Heart left ventricle (tissue), 16 donors: ENCODE measurements at regions of chr3 and their contacts with region 1.

Region 1: DNA sequence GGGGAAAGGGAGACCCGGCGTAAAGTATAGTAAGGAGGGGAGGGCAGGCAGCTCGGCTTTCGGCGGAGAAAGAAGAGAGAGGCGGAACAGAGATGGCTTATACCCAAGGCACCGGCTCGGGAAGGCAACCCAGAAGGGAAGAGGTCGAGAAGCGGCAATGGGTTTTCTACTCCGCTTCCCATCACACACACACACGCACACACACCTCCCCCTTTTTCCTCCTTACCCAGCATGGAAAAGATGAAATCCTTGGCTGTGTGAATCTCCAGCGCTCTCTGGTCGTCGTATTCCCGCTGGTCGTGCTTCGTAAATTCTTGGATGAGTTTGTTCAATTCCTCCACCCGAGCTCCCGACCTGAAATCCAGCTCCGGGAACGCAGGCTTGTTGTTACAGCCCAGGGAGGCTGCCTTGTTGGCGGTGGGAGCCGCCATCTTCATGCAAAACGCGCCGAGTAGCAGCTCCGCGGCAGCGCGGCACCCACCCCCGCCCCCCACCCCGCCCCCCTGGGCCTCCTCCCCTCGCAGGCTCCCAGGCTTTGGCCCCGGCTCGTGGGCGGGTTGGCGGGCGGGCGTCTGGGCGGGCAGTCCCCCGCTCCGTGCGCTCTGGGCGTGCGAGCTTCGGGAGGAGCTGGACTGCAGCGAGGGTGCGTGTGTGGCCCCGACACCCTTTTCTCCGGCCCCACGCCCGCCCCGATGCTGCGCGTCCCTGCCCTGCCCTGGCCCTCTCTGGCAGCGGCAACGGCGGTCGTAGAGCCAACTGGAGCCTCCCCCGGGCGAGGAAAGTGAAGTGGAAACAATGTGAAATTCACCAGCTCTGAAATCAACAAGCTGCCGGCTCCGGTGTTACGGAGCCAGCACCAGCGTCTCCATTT is at the start of gene MB21D2:
- DNase-seq: peak; percentile 82 to 87 (median 84)
- ATAC-seq: peak; percentile 67 to 95 (median 88)
- H3K4me3 ChIP-seq: peak within 1 kb of the TSS; percentile 60 to 95 (median 76)
- H3K27ac ChIP-seq: peak within 1 kb of the TSS; percentile 72 to 97 (median 94)
- H3K4me1 ChIP-seq: peaks cover 0 to 37% (median 26%) of the 10 kb centered on the region in 12 donors
- H3K27me3 ChIP-seq: peaks cover 0 to 7% (median 0%) of the 10 kb centered on the region in 9 donors
- CTCF ChIP-seq: peak in 3 of 12 donors; percentile 13 to 50 (median 20)
- POLR2A ChIP-seq: peak in 1 of 2 donors; percentile 64
- total RNA-seq, gene MB21D2: 2.3 to 5.0 (median 4.0) TPM

Region 2: DNA sequence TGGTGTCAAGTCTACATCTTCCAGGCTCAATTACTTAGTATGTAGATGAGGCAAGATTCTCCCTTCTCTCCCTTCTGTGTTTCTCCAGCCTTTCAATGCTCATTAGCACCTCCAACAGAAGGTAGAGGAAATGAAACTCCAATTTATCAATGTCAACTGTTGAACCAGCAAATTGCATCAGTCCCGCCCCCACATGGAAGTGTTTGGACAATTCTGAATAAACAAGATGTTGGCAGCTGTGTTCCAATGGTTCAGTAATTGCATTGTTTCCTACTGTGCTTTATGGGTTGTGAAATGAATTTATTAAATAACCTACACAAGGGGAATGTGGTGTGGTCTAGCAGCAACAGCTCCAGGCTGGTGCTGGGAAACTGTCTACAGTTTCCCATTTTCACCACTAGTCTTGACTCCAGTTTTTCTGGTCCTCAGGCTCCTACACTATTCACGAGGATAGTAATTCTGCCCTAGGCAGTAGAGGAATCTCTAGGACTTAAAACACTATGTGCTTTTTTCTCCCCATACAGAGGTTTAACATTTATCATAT is 91.9 kb before region 1 on chr3:
- intact Hi-C with region 1: loop called in 6 of 10 experiments (anchors 5 kb)
- DNase-seq: no peak
- ATAC-seq: peak in 1 of 4 donors; percentile 66
- H3K4me3 ChIP-seq: no peak overlapping the region
- H3K27ac ChIP-seq: no peak overlapping the region
- H3K4me1 ChIP-seq: peaks cover 0 to 34% (median 22%) of the 10 kb centered on the region in 12 donors
- H3K27me3 ChIP-seq: no peaks in the 10 kb centered on the region
- CTCF ChIP-seq: peak in 2 of 12 donors; percentile 8 to 14
- POLR2A ChIP-seq: no peak

Region 3: GRCh38 chr3:192831111-192831644 is 86.5 kb before region 1 on chr3:
- intact Hi-C with region 1: loop called in 6 of 10 experiments (anchors 5 kb)
- DNase-seq: no peak
- ATAC-seq: peak in 1 of 4 donors; percentile 39
- H3K4me3 ChIP-seq: no peak overlapping the region
- H3K27ac ChIP-seq: peak overlapping the region in 4 of 12 donors; percentile 5 to 61 (median 24)
- H3K4me1 ChIP-seq: peaks cover 3 to 57% (median 40%) of the 10 kb centered on the region in 12 donors
- H3K27me3 ChIP-seq: no peaks in the 10 kb centered on the region
- CTCF ChIP-seq: no peak
- POLR2A ChIP-seq: no peak

Region 4: DNA sequence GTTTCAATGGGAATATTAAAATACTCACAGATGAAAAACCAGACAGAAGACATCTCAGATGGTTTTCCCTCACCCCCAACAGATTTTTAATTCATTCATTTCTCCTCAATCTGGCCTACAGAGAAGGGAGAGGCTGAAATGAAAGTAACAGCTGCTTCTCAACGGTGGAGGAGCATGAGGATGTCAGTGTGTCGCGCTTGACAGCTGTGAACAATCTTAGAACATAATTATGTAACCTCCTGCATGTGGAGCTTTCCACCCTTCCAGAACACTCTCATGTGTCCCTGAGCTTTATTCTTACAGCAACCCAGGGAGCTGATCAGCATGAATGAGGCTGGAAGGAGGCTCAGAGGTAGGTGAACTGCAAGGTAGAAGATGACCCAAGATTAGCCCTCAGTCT is 52.7 kb before region 1 on chr3:
- intact Hi-C with region 1: loop called in 1 of 10 experiments (anchors 5 kb)
- DNase-seq: peak in 1 of 5 donors; percentile 18
- ATAC-seq: peak; percentile 48 to 71 (median 67)
- H3K4me3 ChIP-seq: no peak overlapping the region
- H3K27ac ChIP-seq: peak overlapping the region in 2 of 12 donors; percentile 34 to 42
- H3K4me1 ChIP-seq: peaks cover 3 to 43% (median 27%) of the 10 kb centered on the region in 12 donors
- H3K27me3 ChIP-seq: no peaks in the 10 kb centered on the region
- CTCF ChIP-seq: no peak
- POLR2A ChIP-seq: no peak

Region 5: GRCh38 chr3:193016437-193016901 is 98.8 kb after region 1 on chr3:
- intact Hi-C with region 1: loop called in 2 of 10 experiments (anchors 5 to 10 kb)
- DNase-seq: peak; percentile 52 to 75 (median 55)
- ATAC-seq: peak; percentile 64 to 83 (median 76)
- H3K4me3 ChIP-seq: no peak overlapping the region
- H3K27ac ChIP-seq: no peak overlapping the region
- H3K4me1 ChIP-seq: peaks cover 0 to 15% (median 5%) of the 10 kb centered on the region in 12 donors
- H3K27me3 ChIP-seq: no peaks in the 10 kb centered on the region
- CTCF ChIP-seq: no peak
- POLR2A ChIP-seq: no peak

Region 6: DNA sequence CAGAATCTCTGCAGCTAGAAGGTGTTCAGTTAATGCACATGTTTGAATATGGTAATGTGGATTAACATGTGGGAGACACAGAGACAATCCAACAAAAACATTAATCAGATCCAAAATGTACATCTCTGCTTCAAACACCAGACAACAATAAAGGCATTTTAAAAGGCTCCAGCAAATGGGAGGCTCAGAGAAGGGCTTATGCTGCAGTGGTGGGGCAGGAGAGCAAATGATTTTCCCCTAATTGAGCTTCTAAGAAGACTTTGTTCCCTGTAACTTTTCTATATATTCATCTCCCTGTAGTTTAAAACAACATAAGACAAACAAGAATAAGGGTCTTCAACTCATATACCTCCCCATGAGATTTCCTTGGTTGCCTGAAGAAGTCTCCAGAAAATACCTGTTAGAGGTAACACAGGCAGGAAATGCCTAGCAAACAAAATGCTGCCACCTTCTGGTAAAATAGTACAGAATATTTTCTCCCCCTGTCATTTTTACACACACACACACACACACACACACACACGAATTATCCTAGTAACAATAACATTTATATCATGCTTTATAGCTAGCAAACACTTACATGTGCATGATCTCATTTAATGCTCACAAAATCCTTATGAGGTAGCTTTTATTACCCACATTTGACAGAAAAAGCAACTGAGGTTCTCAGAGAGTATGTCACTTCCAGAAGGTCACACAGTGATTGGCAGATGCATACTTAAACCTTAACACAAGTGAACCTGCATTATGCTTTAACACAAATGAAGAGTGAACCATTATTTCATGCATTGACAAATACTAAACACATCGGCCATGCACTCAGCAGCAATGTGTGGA is 123.4 kb after region 1 on chr3:
- intact Hi-C with region 1: loop called in 8 of 10 experiments (anchors 2 to 10 kb)
- DNase-seq: no peak
- ATAC-seq: peak in 1 of 4 donors; percentile 46
- H3K4me3 ChIP-seq: no peak overlapping the region
- H3K27ac ChIP-seq: no peak overlapping the region
- H3K4me1 ChIP-seq: no peaks in the 10 kb centered on the region
- H3K27me3 ChIP-seq: no peaks in the 10 kb centered on the region
- CTCF ChIP-seq: peak; percentile 31 to 71 (median 57)
- POLR2A ChIP-seq: no peak

Region 7: GRCh38 chr3:193572426-193572908 is 654.8 kb after region 1 on chr3:
- intact Hi-C with region 1: loop called in 1 of 10 experiments (anchors 10 kb)
- DNase-seq: peak in 4 of 5 donors; percentile 37 to 48 (median 42)
- ATAC-seq: peak; percentile 37 to 79 (median 70)
- H3K4me3 ChIP-seq: no peak overlapping the region
- H3K27ac ChIP-seq: no peak overlapping the region
- H3K4me1 ChIP-seq: no peaks in the 10 kb centered on the region
- H3K27me3 ChIP-seq: no peaks in the 10 kb centered on the region
- CTCF ChIP-seq: peak; percentile 56 to 87 (median 74)
- POLR2A ChIP-seq: no peak